ENCODE measurements at regions of chr6 and their contacts with region 1.

Region 1: DNA sequence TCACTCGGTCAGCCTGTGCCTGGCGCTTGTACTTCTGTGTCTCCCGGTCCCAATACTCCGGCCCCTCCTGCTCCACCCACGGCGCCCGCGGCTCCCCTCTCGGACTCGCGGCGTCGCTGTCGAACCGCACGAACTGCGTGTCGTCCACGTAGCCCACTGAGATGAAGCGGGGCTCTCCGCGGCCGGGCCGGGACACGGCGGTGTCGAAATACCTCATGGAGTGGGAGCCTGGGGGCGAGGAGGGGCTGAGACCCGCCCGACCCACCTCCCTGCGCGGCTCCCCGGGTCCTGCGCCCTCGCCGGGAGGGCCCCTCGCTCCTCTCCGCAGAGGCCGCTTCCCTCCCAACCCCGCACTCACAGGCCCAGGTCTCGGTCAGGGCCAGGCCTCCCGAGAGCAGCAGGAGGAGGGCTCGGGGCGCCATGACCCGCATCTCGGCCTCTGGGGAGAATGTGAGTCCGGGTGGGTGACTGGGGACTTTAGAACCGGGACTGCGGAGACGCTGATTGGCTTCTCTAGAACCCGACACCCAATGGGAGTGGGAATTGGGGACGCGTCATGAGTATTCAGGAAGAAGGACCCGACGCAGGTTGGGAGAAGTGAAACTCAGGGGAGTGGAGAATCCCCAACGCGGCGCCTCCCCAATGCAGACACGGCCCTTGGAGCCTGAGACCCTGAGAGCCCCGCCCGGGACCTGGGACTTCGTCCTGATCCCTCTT is at the start of gene HLA-C:
- DNase-seq: peak; percentile 96
- ATAC-seq: peak; percentile 99
- H3K4me3 ChIP-seq: peak within 1 kb of the TSS; percentile 84
- H3K27ac ChIP-seq: no peak within 1 kb of the TSS
- H3K4me1 ChIP-seq: peaks cover 3% of the 10 kb centered on the region; the same call in 1 of the 2 replicates
- H3K27me3 ChIP-seq: peaks cover 8% of the 10 kb centered on the region; the same call in 1 of the 2 replicates
- CTCF ChIP-seq: no peak
- total RNA-seq, gene HLA-C: 219 and 252 TPM in 2 replicates

Region 2: GRCh38 chr6:31332637-31333602 is 61.1 kb after region 1 on chr6:
- CTCF ChIA-PET with region 1: no interaction called
- POLR2A ChIA-PET with region 1: no interaction called
- intact Hi-C with region 1: no loop called
- DNase-seq: no peak
- ATAC-seq: no peak
- H3K4me3 ChIP-seq: no peak overlapping the region
- H3K27ac ChIP-seq: no peak overlapping the region
- H3K4me1 ChIP-seq: no peaks in the 10 kb centered on the region
- H3K27me3 ChIP-seq: 0 out of 2 replicates have a peak, but pooled peaks cover 3% of the 10 kb centered on the region
- CTCF ChIP-seq: no peak

Region 3: DNA sequence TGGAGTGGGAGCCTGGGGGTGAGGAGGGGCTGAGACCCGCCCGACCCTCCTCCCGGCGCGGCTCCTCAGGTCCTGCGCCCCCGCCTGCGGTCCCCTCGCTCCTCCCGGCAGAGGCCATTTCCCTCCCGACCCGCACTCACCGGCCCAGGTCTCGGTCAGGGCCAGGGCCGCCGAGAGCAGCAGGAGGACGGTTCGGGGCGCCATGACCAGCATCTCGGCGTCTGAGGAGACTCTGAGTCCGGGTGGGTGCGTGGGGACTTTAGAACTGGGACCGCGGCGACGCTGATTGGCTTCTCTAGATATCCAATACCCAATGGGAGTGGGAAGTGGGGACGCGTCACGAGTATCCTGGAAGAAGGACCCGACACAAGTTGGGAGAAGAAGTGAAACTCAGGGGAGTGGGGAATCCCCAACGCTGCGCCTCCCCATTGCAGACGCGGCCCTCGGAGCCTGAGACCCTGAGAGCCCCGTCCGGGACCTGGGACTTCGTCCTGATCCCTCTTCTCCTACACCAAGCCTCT is 85.2 kb after region 1 on chr6 and contains the start of gene HLA-B:
- CTCF ChIA-PET with region 1: no interaction called
- POLR2A ChIA-PET with region 1: no interaction called
- intact Hi-C with region 1: loop called (anchors 5 kb)
- DNase-seq: peak; percentile 62
- ATAC-seq: peak; percentile 92
- H3K4me3 ChIP-seq: peak within 1 kb of the TSS; percentile 87
- H3K27ac ChIP-seq: no peak within 1 kb of the TSS
- H3K4me1 ChIP-seq: no peaks in the 10 kb centered on the region
- H3K27me3 ChIP-seq: peaks cover 4% of the 10 kb centered on the region; the same call in 1 of the 2 replicates
- CTCF ChIP-seq: no peak
- total RNA-seq, gene HLA-B: 55.4 and 168 TPM in 2 replicates

Measured in PC-3 (cell line).